ENCODE measurements at regions of chr1 and their contacts with region 1.

Region 1: DNA sequence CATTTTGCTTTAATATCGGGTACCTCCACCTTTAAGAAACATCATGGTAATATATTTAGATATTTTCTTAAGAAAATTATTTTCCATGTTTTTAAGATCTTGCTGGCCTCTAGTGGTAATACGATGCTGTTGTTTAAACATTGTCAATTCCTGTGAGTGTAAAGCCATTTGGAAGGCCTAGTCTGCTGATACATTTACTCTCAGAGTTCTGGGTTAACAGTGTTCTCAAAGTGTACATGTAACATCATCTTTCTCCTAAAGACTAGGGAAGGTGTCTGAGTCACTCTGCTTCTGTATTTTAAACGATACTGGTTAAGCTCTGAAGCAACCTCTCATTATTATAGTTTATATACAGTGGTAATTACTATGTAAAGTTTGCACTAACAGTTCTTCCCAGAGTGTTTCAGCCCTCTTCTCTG is 189.1 kb downstream of the RASAL2 start:
- DNase-seq: peak in 1 of 2 experiments; percentile 67
- H3K4me3 ChIP-seq: no peak overlapping the region
- H3K27ac ChIP-seq: 0 out of 2 replicates have a peak overlapping the region, but pooled peaks have one; percentile 25
- H3K4me1 ChIP-seq: peaks cover 27% of the 10 kb centered on the region
- H3K27me3 ChIP-seq: no peaks in the 10 kb centered on the region
- CTCF ChIP-seq: peak; percentile 68

Region 2: DNA sequence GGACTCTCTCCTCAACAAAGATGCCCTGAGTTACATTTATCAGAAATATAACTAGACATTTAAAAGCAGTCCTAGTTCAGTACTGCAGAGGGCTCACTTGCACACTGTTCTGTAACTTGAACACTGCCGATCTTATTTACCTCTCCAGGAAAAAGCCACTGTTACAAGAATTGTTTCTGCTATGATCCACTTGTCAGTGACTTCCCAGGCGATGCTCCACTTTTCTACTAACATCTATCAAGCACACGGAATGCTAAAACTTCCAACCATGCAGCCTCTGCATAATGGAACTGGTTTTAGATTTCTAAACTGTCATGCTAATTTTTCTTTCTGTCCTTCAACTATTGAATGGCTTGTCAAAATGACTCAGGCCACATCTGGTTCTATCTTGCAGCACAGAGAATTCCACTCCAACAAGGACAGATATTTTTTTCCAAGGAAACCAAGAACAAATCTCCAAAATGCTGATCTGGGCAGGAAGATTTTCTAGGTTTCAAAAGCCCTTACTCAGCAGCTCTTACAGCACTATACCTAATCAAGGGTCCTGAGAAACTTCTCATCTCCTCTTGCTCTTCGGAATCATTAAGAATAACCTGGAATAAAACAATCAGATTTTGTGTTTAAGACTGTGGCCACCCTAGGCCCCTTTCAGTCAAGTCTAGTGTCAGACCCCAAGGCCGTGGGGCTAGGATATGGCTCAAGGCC is 323.0 kb before region 1 on chr1:
- CTCF ChIA-PET with region 1: no interaction called
- POLR2A ChIA-PET with region 1: no interaction called
- intact Hi-C with region 1: loop called (anchors 5 kb)
- DNase-seq: no peak
- H3K4me3 ChIP-seq: no peak overlapping the region
- H3K27ac ChIP-seq: no peak overlapping the region
- H3K4me1 ChIP-seq: no peaks in the 10 kb centered on the region
- H3K27me3 ChIP-seq: no peaks in the 10 kb centered on the region
- CTCF ChIP-seq: peak; percentile 63

Region 3: DNA sequence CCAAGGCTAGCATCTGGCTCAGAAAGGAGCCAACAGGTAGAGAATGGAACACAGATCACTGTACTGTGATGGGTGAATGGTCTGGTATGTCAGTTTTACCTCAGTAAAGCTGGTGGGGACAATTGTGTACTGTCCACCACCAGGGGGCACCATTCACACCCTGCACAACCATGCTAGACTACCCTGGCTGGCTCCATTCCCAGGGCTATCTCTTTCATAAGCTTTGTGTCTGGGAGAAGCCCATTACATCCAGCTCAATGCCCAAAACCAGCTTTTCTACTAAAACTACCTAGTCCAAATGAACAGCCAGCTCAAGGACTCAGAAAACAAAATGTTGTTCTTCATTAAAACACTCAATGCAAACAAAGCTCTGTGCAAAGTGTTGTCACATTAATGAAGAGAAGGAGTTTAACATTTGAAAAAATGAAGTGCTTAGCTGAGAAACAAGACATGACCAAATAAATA is 251.1 kb before region 1 on chr1:
- CTCF ChIA-PET with region 1: interaction called, 11 read pairs
- POLR2A ChIA-PET with region 1: no interaction called
- intact Hi-C with region 1: loop called (anchors 1 kb)
- DNase-seq: peak; percentile 86 to 87
- H3K4me3 ChIP-seq: no peak overlapping the region
- H3K27ac ChIP-seq: peak overlapping the region; percentile 46
- H3K4me1 ChIP-seq: peaks cover 20% of the 10 kb centered on the region
- H3K27me3 ChIP-seq: no peaks in the 10 kb centered on the region
- CTCF ChIP-seq: peak; percentile 91

Region 4: DNA sequence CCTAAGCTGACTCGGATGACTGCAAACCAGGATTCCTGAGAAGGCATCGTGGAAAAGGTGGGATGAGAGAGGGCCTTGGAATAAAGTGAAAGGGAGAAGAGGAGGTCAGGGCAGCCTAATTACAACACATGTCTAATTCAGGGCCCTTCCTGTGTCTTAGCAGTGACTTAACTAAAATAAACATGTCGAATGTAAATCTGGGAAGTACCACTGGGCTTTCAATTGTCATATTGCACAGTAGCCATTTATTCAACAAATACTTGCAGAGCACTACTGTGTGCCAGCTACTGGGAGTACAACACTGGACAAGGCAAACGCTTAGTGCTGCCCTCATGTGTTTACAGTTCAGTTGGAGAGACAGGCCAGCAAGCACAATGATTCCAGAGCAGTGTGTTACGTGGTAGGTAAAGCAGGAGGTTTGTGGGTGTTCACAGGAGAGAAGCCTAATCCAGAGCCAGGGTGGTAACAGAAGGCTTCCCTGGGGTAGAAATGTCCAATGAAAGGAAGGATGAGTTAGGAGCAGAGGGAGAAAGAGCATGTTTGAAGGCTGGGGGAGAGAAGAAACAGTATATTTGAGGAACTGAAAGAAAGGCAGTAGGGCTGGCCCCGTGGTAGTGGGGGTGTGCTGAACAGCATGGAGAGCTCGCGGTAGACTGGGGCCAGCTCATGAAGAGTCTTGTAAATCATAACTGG is 227.0 kb before region 1 on chr1:
- CTCF ChIA-PET with region 1: no interaction called
- POLR2A ChIA-PET with region 1: no interaction called
- intact Hi-C with region 1: loop called (anchors 1 kb)
- DNase-seq: peak in 1 of 2 experiments; percentile 37
- H3K4me3 ChIP-seq: no peak overlapping the region
- H3K27ac ChIP-seq: no peak overlapping the region
- H3K4me1 ChIP-seq: peaks cover 49% of the 10 kb centered on the region
- H3K27me3 ChIP-seq: no peaks in the 10 kb centered on the region
- CTCF ChIP-seq: no peak

Region 5: DNA sequence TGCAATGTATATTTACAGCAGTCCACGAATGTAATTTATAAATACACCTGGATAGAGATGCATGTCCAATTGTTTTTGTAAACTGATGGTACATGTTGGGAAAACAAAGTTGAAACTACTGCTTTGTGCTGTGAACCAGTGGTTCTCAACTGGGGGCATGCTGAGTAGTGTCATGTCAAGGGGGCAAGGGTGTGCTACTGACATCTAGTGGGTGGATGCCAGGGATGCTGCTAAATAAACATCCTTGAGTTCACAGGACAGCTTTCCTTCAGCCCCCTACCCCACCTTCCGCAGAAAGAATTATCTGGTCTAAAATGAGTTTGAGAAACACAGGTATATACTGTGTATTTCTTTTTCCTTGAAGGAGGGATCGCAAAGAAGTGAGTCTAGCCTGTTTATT is 93.1 kb before region 1 on chr1:
- CTCF ChIA-PET with region 1: no interaction called
- POLR2A ChIA-PET with region 1: no interaction called
- intact Hi-C with region 1: loop called (anchors 5 kb)
- DNase-seq: no peak
- H3K4me3 ChIP-seq: no peak overlapping the region
- H3K27ac ChIP-seq: no peak overlapping the region
- H3K4me1 ChIP-seq: peaks cover 8% of the 10 kb centered on the region; the same call in 1 of the 2 replicates
- H3K27me3 ChIP-seq: no peaks in the 10 kb centered on the region
- CTCF ChIP-seq: peak; percentile 52

Region 6: GRCh38 chr1:178267646-178268094 is 15.3 kb before region 1 on chr1:
- CTCF ChIA-PET with region 1: no interaction called
- POLR2A ChIA-PET with region 1: interaction called, 17 read pairs
- intact Hi-C with region 1: no loop called
- DNase-seq: peak; percentile 66 to 90
- H3K4me3 ChIP-seq: no peak overlapping the region
- H3K27ac ChIP-seq: peak overlapping the region; percentile 78
- H3K4me1 ChIP-seq: peaks cover 29% of the 10 kb centered on the region
- H3K27me3 ChIP-seq: no peaks in the 10 kb centered on the region
- CTCF ChIP-seq: no peak

Region 7: GRCh38 chr1:178749581-178750166 is 466.7 kb after region 1 on chr1:
- CTCF ChIA-PET with region 1: no interaction called
- POLR2A ChIA-PET with region 1: no interaction called
- intact Hi-C with region 1: no loop called
- DNase-seq: no peak
- H3K4me3 ChIP-seq: no peak overlapping the region
- H3K27ac ChIP-seq: no peak overlapping the region
- H3K4me1 ChIP-seq: no peaks in the 10 kb centered on the region
- H3K27me3 ChIP-seq: no peaks in the 10 kb centered on the region
- CTCF ChIP-seq: no peak

Region 8: GRCh38 chr1:179334440-179334839 is 1051.5 kb after region 1 on chr1:
- CTCF ChIA-PET with region 1: interaction called, 15 read pairs
- POLR2A ChIA-PET with region 1: no interaction called
- intact Hi-C with region 1: no loop called
- DNase-seq: no peak
- H3K4me3 ChIP-seq: no peak overlapping the region
- H3K27ac ChIP-seq: no peak overlapping the region
- H3K4me1 ChIP-seq: no peaks in the 10 kb centered on the region
- H3K27me3 ChIP-seq: no peaks in the 10 kb centered on the region
- CTCF ChIP-seq: no peak